CD8-positive, alpha-beta T cell (primary cell): ENCODE measurements at regions of chr7 and their contacts with region 1.

Region 1: GRCh38 chr7:140899883-140900282 is 24.8 kb downstream of the BRAF start:
- DNase-seq: no peak
- ATAC-seq: no peak
- H3K4me3 ChIP-seq: no peak overlapping the region
- H3K4me3 Mint-ChIP-seq: no peak overlapping the region
- H3K27ac ChIP-seq: no peak overlapping the region
- H3K27ac Mint-ChIP-seq: no peak overlapping the region
- H3K4me1 ChIP-seq: peaks cover 29% of the 10 kb centered on the region
- H3K4me1 Mint-ChIP-seq: peaks cover 86% of the 10 kb centered on the region
- H3K27me3 ChIP-seq: no peaks in the 10 kb centered on the region
- H3K27me3 Mint-ChIP-seq: no peaks in the 10 kb centered on the region
- CTCF ChIP-seq: no peak

Region 2: DNA sequence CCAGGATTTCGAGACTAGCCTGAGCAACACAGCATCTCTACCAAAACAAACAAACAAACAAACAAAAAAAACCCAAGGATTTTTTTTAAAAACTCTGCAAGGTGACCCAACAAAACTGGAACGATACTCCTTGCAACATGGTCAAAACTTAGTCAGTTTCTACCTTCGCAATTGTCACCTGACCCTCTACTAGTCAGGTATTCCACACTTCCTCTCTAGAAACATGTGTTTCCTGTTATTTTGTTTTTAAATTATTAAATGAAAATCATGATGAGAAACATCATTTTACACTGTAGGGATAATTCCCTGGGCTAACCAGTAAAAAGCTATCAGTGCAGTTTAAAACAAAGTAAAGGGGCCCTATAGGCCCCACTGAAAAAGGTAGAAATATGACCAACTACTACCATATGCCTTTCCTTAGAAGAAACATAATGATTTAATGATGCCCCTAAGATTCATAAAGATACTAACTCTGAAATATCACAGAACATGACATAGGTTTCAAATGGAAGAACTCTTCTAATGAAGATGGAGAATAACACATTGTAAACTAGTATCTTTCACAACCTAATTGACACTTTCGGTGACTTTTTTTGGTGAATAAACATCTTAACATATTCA is 16.2 kb after region 1 on chr7:
- CTCF ChIA-PET with region 1: no interaction called
- POLR2A ChIA-PET with region 1: no interaction called
- intact Hi-C with region 1: loop called in 1 of 2 experiments (anchors 2 kb)
- DNase-seq: no peak
- ATAC-seq: no peak
- H3K4me3 ChIP-seq: no peak overlapping the region
- H3K4me3 Mint-ChIP-seq: no peak overlapping the region
- H3K27ac ChIP-seq: no peak overlapping the region
- H3K27ac Mint-ChIP-seq: no peak overlapping the region
- H3K4me1 ChIP-seq: peaks cover 12% of the 10 kb centered on the region
- H3K4me1 Mint-ChIP-seq: peaks cover 70% of the 10 kb centered on the region
- H3K27me3 ChIP-seq: no peaks in the 10 kb centered on the region
- H3K27me3 Mint-ChIP-seq: no peaks in the 10 kb centered on the region
- CTCF ChIP-seq: no peak

Region 3: DNA sequence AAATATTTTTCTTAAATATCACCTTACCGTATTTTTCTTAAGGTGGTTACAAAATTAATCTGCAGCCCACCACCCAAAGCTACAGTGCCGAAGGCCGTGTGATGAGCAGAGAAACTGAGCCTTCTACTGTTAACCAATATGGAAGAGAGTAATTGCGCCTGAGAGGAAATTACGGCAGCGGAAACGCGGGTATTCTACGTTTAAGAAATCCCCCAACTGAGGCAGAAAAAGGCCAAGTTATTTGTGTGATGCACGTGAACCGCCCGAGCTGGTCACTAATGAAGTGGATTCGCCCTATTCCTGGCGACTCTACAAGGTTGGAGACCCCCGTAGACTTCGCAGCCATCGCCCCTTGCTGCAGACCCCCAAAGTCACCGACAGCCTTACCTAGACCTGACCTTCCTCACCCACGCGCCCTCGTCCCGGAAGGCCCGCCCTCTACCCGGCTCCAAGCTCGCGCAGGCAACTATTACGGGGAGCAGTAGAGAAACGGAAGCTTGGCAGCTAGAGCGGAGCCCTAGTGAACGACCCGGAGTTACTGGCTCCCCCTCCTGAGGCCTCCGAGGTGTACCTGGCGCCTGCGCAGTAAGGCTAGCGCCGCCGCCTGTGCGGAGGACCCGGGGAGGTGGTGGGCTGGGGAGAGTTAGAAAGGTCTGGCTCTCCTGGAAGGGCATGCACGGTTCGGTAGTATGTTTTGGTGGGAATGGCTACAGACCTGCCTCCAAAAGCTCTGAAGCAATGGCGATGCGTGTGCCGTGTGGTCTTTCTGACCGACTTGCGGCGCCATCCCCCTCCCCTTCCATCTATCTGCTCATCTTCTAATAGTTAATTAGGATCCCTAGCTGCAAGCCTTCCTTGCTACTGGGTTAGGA is 114.9 kb after region 1 on chr7 and contains the start of gene MRPS33:
- CTCF ChIA-PET with region 1: no interaction called
- POLR2A ChIA-PET with region 1: no interaction called
- intact Hi-C with region 1: no loop called
- DNase-seq: peak; percentile 88 to 98 (median 94)
- ATAC-seq: peak; percentile 96
- H3K4me3 ChIP-seq: peak within 1 kb of the TSS; percentile 71 to 80
- H3K4me3 Mint-ChIP-seq: peak within 1 kb of the TSS; percentile 100
- H3K27ac ChIP-seq: peak within 1 kb of the TSS; percentile 96 to 100
- H3K27ac Mint-ChIP-seq: peak within 1 kb of the TSS; percentile 100
- H3K4me1 ChIP-seq: peaks cover 17% of the 10 kb centered on the region
- H3K4me1 Mint-ChIP-seq: peaks cover 32% of the 10 kb centered on the region
- H3K27me3 ChIP-seq: no peaks in the 10 kb centered on the region
- H3K27me3 Mint-ChIP-seq: peaks cover 12% of the 10 kb centered on the region
- CTCF ChIP-seq: peak; percentile 45
- total RNA-seq, gene MRPS33: 17.4 to 19.9 TPM

Region 4: DNA sequence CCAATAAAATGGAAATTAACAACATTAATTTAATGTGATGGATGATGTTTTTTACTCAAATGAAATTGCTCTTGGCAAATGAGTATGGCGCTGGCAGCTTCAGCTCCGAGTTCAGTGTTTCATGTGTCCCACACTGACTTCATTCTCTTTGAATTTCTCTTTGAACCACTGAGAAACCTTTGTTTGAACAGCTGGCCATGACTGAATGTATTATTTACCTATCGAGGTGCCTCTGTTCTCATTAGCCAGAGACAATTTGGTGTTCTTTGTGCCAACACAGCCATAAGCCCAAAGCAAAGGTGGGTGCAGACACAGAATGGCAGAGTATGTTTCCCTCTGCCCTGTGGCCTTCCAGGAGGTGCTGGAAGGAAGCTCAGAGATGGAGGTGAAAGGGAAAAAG is 216.1 kb after region 1 on chr7:
- CTCF ChIA-PET with region 1: no interaction called
- POLR2A ChIA-PET with region 1: no interaction called
- intact Hi-C with region 1: no loop called
- DNase-seq: no peak
- ATAC-seq: no peak
- H3K4me3 ChIP-seq: no peak overlapping the region
- H3K4me3 Mint-ChIP-seq: no peak overlapping the region
- H3K27ac ChIP-seq: no peak overlapping the region
- H3K27ac Mint-ChIP-seq: no peak overlapping the region
- H3K4me1 ChIP-seq: no peaks in the 10 kb centered on the region
- H3K4me1 Mint-ChIP-seq: no peaks in the 10 kb centered on the region
- H3K27me3 ChIP-seq: no peaks in the 10 kb centered on the region
- H3K27me3 Mint-ChIP-seq: peaks cover 2% of the 10 kb centered on the region
- CTCF ChIP-seq: no peak